Endothelial cell of umbilical vein (primary cell): ENCODE measurements at regions of chr16 and their contacts with region 1.

Region 1: DNA sequence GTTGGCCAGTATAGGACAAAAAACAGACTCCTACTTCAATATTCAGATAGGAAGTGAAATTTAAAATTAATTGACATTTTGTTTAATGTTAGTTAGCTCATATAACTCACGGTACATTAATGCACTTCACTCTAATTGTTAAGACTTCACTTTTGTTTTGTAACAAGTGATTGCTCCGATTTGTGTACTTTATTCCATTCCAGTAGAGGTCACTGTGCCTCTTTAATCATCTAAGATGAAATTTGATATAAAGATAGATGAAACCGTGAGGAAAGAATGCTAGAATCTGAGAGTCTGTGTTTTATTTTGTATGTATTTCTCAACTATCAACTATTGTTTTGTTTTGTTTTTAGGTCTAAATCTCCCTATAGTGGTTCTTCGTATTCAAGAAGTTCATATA is 29.0 kb downstream of the RBBP6 start:
- DNase-seq: peak; percentile 39
- H3K4me3 ChIP-seq: no peak overlapping the region
- H3K27ac ChIP-seq: no peak overlapping the region
- H3K4me1 ChIP-seq: no peaks in the 10 kb centered on the region
- H3K27me3 ChIP-seq: no peaks in the 10 kb centered on the region
- CTCF ChIP-seq: peak; percentile 1 to 15
- POLR2A ChIP-seq: no peak

Region 2: DNA sequence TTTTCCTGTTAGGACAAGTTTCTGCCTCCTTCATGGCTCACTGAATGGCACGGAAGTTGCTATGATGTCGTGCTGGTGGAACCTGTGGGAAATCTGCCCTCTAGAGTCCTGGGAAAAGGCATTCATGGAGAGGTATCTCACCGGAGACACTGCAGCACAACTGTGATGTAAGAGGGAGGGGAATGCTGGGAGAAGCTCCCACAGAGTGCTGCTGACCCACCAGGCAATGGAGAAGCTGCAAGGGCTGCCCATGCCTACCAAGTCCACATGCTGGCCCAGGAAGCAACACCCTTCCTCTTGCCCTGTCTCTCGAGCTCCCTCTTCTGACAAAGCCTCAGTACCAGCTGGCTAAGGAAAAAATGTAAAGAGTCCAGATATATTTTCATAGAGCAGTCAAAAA is 232.2 kb after region 1 on chr16:
- CTCF ChIA-PET with region 1: interaction called, 16 read pairs
- POLR2A ChIA-PET with region 1: no interaction called
- dilution Hi-C with region 1: no loop called
- intact Hi-C with region 1: loop called (anchors 2 kb)
- DNase-seq: peak; percentile 35
- H3K4me3 ChIP-seq: no peak overlapping the region
- H3K27ac ChIP-seq: no peak overlapping the region
- H3K4me1 ChIP-seq: no peaks in the 10 kb centered on the region
- H3K27me3 ChIP-seq: no peaks in the 10 kb centered on the region
- CTCF ChIP-seq: peak; percentile 21 to 24
- POLR2A ChIP-seq: no peak

Region 3: GRCh38 chr16:24807301-24807700 is 238.9 kb after region 1 on chr16:
- CTCF ChIA-PET with region 1: interaction called, 16 read pairs
- POLR2A ChIA-PET with region 1: no interaction called
- dilution Hi-C with region 1: no loop called
- intact Hi-C with region 1: loop called (anchors 2 kb)
- DNase-seq: no peak
- H3K4me3 ChIP-seq: no peak overlapping the region
- H3K27ac ChIP-seq: no peak overlapping the region
- H3K4me1 ChIP-seq: no peaks in the 10 kb centered on the region
- H3K27me3 ChIP-seq: no peaks in the 10 kb centered on the region
- CTCF ChIP-seq: no peak
- POLR2A ChIP-seq: no peak